Activated naive CD4-positive, alpha-beta T cell treated with anti-CD3 and anti-CD28 coated beads for 36 hours (primary cell): ENCODE measurements at regions of chr1 and their contacts with region 1.

Region 1: DNA sequence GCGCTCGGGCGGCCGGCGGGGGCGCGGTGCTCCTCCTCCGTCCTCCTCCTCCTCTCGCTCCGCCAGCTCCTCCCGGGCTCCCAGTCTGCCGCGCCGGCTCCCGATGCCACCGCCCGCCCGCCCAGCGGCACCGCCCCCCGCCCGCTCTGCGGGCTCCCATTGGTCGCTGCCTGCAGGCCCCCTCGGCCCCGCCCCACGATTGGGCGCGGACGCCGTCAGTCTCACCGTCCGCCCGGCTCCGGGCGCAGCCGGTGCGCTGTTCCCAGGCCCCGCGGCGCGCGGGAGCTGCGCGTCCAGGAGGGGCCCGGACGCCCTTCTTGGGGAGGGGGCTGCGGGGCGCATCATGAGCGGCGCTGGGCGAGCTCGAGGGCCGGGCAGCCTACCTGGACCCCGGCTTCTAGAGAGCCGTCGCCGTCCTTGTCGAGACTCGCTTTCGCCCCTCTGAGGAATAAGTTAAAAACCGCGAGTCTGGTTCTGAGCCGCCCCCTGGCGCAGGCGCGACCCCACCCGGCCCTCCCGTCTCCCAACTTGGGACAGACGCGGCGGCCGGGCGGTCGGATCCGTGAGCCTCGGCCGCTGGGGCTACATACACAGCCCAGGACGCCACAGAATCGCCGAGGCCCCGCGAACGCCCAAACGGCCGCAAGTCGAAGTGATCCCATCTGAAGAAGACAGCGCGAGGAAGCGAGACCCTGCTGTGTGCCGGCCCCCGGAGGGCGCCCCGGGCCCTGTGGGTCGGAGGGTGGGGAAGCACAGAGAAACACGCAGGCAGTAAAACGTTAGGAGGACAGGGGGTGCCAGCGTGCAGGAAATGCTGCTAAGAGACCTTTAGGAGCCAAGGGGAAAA is at the start of gene SIPA1L2:
- DNase-seq: peak; percentile 84
- H3K4me3 Mint-ChIP-seq: peak within 1 kb of the TSS; percentile 79
- H3K27ac Mint-ChIP-seq: no peak within 1 kb of the TSS
- H3K4me1 Mint-ChIP-seq: peaks cover 27% of the 10 kb centered on the region
- H3K27me3 Mint-ChIP-seq: peaks cover 13% of the 10 kb centered on the region
- total RNA-seq, gene SIPA1L2: 2.1 to 2.6 TPM

Region 2: GRCh38 chr1:231757101-231757404 is 873.2 kb before region 1 on chr1:
- CTCF ChIA-PET with region 1: no interaction called
- intact Hi-C with region 1: loop called (anchors 1 kb)
- DNase-seq: no peak
- H3K4me3 Mint-ChIP-seq: no peak overlapping the region
- H3K27ac Mint-ChIP-seq: no peak overlapping the region
- H3K4me1 Mint-ChIP-seq: no peaks in the 10 kb centered on the region
- H3K27me3 Mint-ChIP-seq: no peaks in the 10 kb centered on the region

Region 3: DNA sequence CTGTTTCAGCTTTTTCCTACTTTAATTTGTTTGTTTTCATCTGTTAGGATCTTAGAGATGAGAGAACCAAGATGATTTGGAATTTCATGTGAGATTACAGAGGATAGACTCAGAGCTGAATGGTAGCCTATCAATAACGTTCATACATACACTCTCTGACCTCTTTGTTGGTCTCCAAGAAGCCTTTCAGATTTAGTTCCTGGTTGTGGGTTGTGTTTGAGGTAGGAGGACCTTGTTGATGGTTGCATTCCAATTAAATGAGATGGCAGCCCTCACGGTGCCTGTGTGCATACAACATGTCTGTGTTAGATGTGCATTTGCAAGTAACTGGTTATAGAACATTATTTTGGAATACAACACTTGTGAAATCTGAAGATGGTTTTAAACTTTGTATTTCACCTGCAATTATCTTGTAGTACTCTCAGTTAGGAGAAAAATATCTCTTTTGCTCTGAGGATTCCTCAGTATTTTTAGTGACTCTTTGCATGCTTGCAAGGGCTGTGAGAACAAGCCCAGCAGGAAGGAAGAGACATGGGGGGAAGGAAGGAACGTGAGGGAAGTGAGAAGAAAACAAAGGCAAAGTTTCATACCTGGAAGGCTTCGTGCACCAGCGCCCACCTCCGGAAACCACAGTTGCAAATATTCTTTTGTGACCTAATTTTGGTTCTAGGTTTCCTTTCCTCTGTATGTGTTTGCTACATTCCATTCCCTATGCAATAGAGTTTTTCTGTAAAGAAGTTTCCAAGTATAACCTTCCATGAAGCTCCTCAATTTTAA is 711.8 kb before region 1 on chr1:
- CTCF ChIA-PET with region 1: no interaction called
- intact Hi-C with region 1: loop called (anchors 5 kb)
- DNase-seq: peak; percentile 53
- H3K4me3 Mint-ChIP-seq: no peak overlapping the region
- H3K27ac Mint-ChIP-seq: no peak overlapping the region
- H3K4me1 Mint-ChIP-seq: peaks cover 68% of the 10 kb centered on the region
- H3K27me3 Mint-ChIP-seq: no peaks in the 10 kb centered on the region

Region 4: DNA sequence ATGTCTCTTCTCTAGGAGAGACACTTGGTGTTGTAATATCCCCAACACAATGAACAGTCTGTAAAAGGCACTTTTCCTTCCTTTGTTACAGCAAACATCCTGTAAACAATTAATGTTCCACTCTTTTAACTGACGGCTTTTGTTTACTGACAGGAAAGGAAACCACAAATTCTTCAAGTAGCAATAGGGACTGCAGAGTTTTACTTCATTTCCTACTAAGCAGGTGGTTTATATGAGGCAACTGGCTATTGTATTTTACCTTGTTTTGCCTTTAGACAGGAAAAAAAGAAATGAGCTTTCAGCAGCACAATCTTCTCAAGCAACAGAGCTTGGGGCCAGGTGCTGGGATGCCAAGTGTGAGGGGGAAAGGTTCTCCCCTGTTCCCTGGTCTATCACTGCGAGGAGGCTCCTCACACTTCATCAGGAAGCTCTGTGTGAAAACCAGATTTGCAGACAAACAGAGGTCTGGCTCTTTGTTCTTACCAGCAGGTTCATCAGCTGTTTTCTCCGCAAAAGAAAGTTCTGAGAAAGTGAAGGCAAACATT is 51.5 kb before region 1 on chr1:
- CTCF ChIA-PET with region 1: no interaction called
- intact Hi-C with region 1: loop called (anchors 2 kb)
- DNase-seq: no peak
- H3K4me3 Mint-ChIP-seq: no peak overlapping the region
- H3K27ac Mint-ChIP-seq: peak overlapping the region; percentile 10
- H3K4me1 Mint-ChIP-seq: peaks cover 29% of the 10 kb centered on the region
- H3K27me3 Mint-ChIP-seq: no peaks in the 10 kb centered on the region

Region 5: GRCh38 chr1:232589812-232590743 is 40.2 kb before region 1 on chr1:
- CTCF ChIA-PET with region 1: no interaction called
- intact Hi-C with region 1: no loop called
- DNase-seq: no peak
- H3K4me3 Mint-ChIP-seq: no peak overlapping the region
- H3K27ac Mint-ChIP-seq: no peak overlapping the region
- H3K4me1 Mint-ChIP-seq: peaks cover 25% of the 10 kb centered on the region
- H3K27me3 Mint-ChIP-seq: no peaks in the 10 kb centered on the region

Region 6: GRCh38 chr1:232805269-232806185 is 175.3 kb after region 1 on chr1 and contains the start of gene MAP10:
- CTCF ChIA-PET with region 1: no interaction called
- intact Hi-C with region 1: loop called (anchors 2 kb)
- DNase-seq: peak; percentile 85
- H3K4me3 Mint-ChIP-seq: peak within 1 kb of the TSS; percentile 81
- H3K27ac Mint-ChIP-seq: peak within 1 kb of the TSS; percentile 59
- H3K4me1 Mint-ChIP-seq: peaks cover 17% of the 10 kb centered on the region
- H3K27me3 Mint-ChIP-seq: peaks cover 2% of the 10 kb centered on the region
- total RNA-seq, gene MAP10: 0.43 to 0.54 TPM

Region 7: DNA sequence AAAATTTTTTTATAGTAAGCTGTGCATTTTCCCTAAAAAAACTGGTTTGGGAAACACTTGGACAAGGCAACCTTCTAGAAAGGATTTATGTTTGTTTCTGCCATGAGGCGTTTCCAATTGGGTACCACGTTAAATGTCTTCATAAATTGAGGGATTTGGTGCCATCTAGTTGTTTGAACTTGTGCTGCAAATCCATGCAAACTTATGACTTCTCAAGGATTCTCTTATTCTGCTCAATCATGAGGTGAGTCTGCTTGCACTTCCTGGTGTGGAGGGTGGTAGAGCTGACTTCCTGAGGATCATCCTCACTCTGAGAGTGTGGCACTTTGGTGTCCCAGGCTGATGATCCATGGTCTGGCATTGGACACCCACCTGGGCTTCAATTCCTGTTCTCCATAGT is 542.0 kb after region 1 on chr1:
- CTCF ChIA-PET with region 1: no interaction called
- intact Hi-C with region 1: loop called (anchors 5 kb)
- DNase-seq: no peak
- H3K4me3 Mint-ChIP-seq: no peak overlapping the region
- H3K27ac Mint-ChIP-seq: no peak overlapping the region
- H3K4me1 Mint-ChIP-seq: no peaks in the 10 kb centered on the region
- H3K27me3 Mint-ChIP-seq: no peaks in the 10 kb centered on the region